ENCODE measurements at regions of chr16 and their contacts with region 1.

Region 1: GRCh38 chr16:86082418-86083030 is 183.6 kb downstream of the IRF8 start:
- DNase-seq: no peak
- H3K4me3 ChIP-seq: no peak overlapping the region
- H3K27ac ChIP-seq: no peak overlapping the region
- H3K4me1 ChIP-seq: no peaks in the 10 kb centered on the region
- H3K27me3 ChIP-seq: peaks cover 95% of the 10 kb centered on the region
- CTCF ChIP-seq: no peak
- EP300 ChIP-seq: no peak
- RAD21 ChIP-seq: no peak

Region 2: GRCh38 chr16:86061721-86062120 is 20.8 kb before region 1 on chr16:
- CTCF ChIA-PET with region 1: no interaction called
- POLR2A ChIA-PET with region 1: no interaction called
- DNase-seq: no peak
- H3K4me3 ChIP-seq: no peak overlapping the region
- H3K27ac ChIP-seq: no peak overlapping the region
- H3K4me1 ChIP-seq: no peaks in the 10 kb centered on the region
- H3K27me3 ChIP-seq: peaks cover 61% of the 10 kb centered on the region
- CTCF ChIP-seq: no peak
- EP300 ChIP-seq: no peak
- RAD21 ChIP-seq: no peak

Region 3: GRCh38 chr16:86072328-86073102 is 10.0 kb before region 1 on chr16:
- CTCF ChIA-PET with region 1: interaction called, 11 read pairs
- POLR2A ChIA-PET with region 1: no interaction called
- DNase-seq: peak; percentile 72
- H3K4me3 ChIP-seq: peak overlapping the region in 1 of 2 experiments; percentile 9; a peak in 1 of 4 replicates
- H3K27ac ChIP-seq: no peak overlapping the region
- H3K4me1 ChIP-seq: no peaks in the 10 kb centered on the region
- H3K27me3 ChIP-seq: peaks cover 60% of the 10 kb centered on the region
- CTCF ChIP-seq: peak; percentile 83
- EP300 ChIP-seq: no peak
- RAD21 ChIP-seq: peak; percentile 74

Region 4: GRCh38 chr16:86093801-86094750 is 11.6 kb after region 1 on chr16:
- CTCF ChIA-PET with region 1: no interaction called
- POLR2A ChIA-PET with region 1: no interaction called
- DNase-seq: no peak
- H3K4me3 ChIP-seq: no peak overlapping the region
- H3K27ac ChIP-seq: no peak overlapping the region
- H3K4me1 ChIP-seq: no peaks in the 10 kb centered on the region
- H3K27me3 ChIP-seq: peaks cover 59% of the 10 kb centered on the region
- CTCF ChIP-seq: 0 out of 2 replicates have a peak, but pooled peaks have one; percentile 15
- EP300 ChIP-seq: no peak
- RAD21 ChIP-seq: no peak